ENCODE measurements at regions of chr6 and their contacts with region 1.

Region 1: DNA sequence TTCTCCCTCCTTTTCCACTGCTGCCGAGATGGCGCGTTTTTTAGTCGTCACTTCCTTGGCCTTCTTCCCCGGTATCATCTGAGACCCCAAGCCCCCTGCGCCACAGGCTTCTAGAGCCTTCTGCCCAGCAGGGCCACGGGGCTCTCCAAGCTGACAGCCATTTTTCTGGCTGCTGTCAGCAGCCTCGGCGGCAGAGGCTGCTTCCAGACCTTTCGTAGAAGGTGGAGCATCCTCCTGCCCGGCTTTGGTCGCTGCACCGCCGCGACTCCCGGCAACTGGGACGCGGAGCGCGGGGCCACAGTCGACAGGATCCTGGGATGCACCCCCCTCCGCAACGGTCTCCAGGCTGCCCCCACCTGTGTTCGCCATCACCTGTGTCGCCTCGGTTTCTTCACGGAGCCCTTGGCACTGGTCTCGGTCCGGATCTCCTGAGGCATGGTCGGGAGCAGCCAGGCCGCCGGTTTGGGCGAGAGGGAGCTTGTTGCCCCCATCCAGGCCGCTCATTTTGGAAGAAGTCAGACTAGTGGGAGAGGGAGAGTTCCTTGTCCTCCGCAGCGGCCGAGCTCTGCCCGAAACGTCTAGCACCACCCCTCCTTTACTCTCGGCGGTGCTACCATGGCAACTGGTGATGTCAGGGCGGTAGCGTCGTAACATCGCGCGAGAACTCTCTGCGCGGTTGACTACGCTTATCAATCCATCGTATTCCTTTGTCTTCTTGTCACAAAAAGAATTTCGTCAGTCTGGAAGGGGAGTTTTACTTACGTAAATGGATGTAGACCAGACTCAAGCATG is at the start of gene TSPYL4:
- DNase-seq: peak; percentile 83 to 96 (median 95)
- H3K4me3 ChIP-seq: peak within 1 kb of the TSS; percentile 66 to 100 (median 95)
- H3K27ac ChIP-seq: peak within 1 kb of the TSS; percentile 56 to 99 (median 93)
- H3K27me3 ChIP-seq: no peaks in the 10 kb centered on the region
- CTCF ChIP-seq: peak in 5 of 56 donors; percentile 15 to 30 (median 28)
- total RNA-seq, gene TSPYL4: 69.8 to 228 (median 162) TPM

Region 2: GRCh38 chr6:116229287-116229913 is 24.3 kb before region 1 on chr6:
- intact Hi-C with region 1: loop called in 1 of 2 experiments (anchors 2 kb)
- DNase-seq: peak; percentile 95 to 100 (median 98)
- H3K4me3 ChIP-seq: peak overlapping the region; percentile 18 to 71 (median 55)
- H3K27ac ChIP-seq: peak overlapping the region in 58 of 59 donors; percentile 22 to 92 (median 77)
- H3K27me3 ChIP-seq: no peaks in the 10 kb centered on the region
- CTCF ChIP-seq: peak in 2 of 56 donors; percentile 19 to 26

Region 3: GRCh38 chr6:116954938-116955337 is 701.2 kb after region 1 on chr6:
- intact Hi-C with region 1: no loop called
- DNase-seq: no peak
- H3K4me3 ChIP-seq: no peak overlapping the region
- H3K27ac ChIP-seq: no peak overlapping the region
- H3K27me3 ChIP-seq: no peaks in the 10 kb centered on the region
- CTCF ChIP-seq: no peak